CD14-positive monocyte (primary cell): ENCODE measurements at regions of chr18 and their contacts with region 1.

Region 1: GRCh38 chr18:54983041-54983686 is 23.9 kb upstream of the CCDC68 start:
- DNase-seq: peak; percentile 25 to 57 (median 48)
- H3K4me3 ChIP-seq: no peak overlapping the region
- H3K4me3 Mint-ChIP-seq: no peak overlapping the region
- H3K27ac ChIP-seq: no peak overlapping the region
- H3K27ac Mint-ChIP-seq: no peak overlapping the region
- H3K4me1 ChIP-seq: no peaks in the 10 kb centered on the region
- H3K4me1 Mint-ChIP-seq: no peaks in the 10 kb centered on the region
- H3K27me3 ChIP-seq: no peaks in the 10 kb centered on the region
- H3K27me3 Mint-ChIP-seq: peaks cover 2 to 8% (median 7%) of the 10 kb centered on the region in 3 donors
- CTCF ChIP-seq: peak; percentile 85

Region 2: GRCh38 chr18:54392543-54393023 is 590.6 kb before region 1 on chr18:
- intact Hi-C with region 1: loop called in 1 of 2 experiments (anchors 10 kb)
- DNase-seq: peak; percentile 53 to 77 (median 56)
- H3K4me3 ChIP-seq: no peak overlapping the region
- H3K4me3 Mint-ChIP-seq: no peak overlapping the region
- H3K27ac ChIP-seq: no peak overlapping the region
- H3K27ac Mint-ChIP-seq: no peak overlapping the region
- H3K4me1 ChIP-seq: peaks cover 14 to 20% of the 10 kb centered on the region in 2 donors
- H3K4me1 Mint-ChIP-seq: peaks cover 18% of the 10 kb centered on the region
- H3K27me3 ChIP-seq: no peaks in the 10 kb centered on the region
- H3K27me3 Mint-ChIP-seq: peaks cover 3 to 5% (median 4%) of the 10 kb centered on the region in 3 donors
- CTCF ChIP-seq: peak; percentile 79

Region 3: DNA sequence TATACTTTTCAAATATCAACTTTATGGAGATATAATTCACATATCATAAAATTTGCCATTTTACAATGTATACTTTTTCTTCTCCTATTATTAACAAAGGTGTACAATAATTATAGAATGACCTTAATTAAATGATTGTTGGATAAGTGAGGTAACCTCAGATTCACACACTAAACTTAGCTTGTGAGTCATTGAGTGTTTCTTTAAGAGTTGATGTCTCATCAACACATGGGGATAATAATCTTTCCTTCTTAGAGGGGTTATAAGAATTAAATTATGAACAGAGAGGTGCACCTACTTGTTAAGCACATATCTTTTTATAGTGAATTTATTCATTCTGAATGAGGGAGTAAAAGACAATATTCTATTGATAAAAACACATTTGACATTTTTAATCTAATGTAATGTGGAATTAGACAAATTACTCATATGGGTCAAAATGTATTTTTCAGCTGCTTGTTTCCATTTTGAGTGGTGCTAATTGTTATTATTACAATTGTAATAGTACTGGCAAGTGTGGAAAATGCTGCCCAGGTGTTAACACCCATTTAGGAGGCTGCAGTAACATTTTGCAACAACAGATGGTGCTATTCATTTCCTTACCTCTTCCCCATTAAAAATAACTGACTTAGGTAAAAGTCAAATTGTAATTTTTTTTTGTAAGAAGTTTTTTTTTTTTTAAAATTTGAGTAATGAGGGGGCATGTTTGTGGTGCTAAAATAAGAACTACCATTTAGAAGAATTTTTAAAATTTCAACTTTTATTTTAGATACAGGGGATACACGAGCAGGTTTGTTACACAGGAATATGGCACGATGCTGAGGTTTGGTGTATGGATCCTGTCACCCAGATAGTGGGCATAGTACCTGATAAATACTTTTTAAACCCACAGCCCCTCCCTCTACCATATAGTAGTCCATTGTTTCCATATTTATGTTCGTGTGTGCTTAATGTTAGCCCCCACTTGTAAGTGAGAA is 424.3 kb before region 1 on chr18:
- intact Hi-C with region 1: loop called in 1 of 2 experiments (anchors 10 kb)
- DNase-seq: no peak
- H3K4me3 ChIP-seq: no peak overlapping the region
- H3K4me3 Mint-ChIP-seq: no peak overlapping the region
- H3K27ac ChIP-seq: no peak overlapping the region
- H3K27ac Mint-ChIP-seq: no peak overlapping the region
- H3K4me1 ChIP-seq: no peaks in the 10 kb centered on the region
- H3K4me1 Mint-ChIP-seq: no peaks in the 10 kb centered on the region
- H3K27me3 ChIP-seq: no peaks in the 10 kb centered on the region
- H3K27me3 Mint-ChIP-seq: peaks cover 0 to 5% (median 0%) of the 10 kb centered on the region in 3 donors
- CTCF ChIP-seq: peak; percentile 63

Region 4: GRCh38 chr18:55214969-55215368 is 231.8 kb after region 1 on chr18:
- intact Hi-C with region 1: no loop called
- DNase-seq: no peak
- H3K4me3 ChIP-seq: no peak overlapping the region
- H3K4me3 Mint-ChIP-seq: no peak overlapping the region
- H3K27ac ChIP-seq: no peak overlapping the region
- H3K27ac Mint-ChIP-seq: no peak overlapping the region
- H3K4me1 ChIP-seq: no peaks in the 10 kb centered on the region
- H3K4me1 Mint-ChIP-seq: no peaks in the 10 kb centered on the region
- H3K27me3 ChIP-seq: no peaks in the 10 kb centered on the region
- H3K27me3 Mint-ChIP-seq: peaks cover 0 to 3% (median 2%) of the 10 kb centered on the region in 3 donors
- CTCF ChIP-seq: no peak